Mammary epithelial cell (primary cell): ENCODE measurements at regions of chr2 and their contacts with region 1.

Region 1: GRCh38 chr2:240205348-240205747 is 64.9 kb upstream of the OTOS start:
- DNase-seq: peak; percentile 98
- H3K4me3 ChIP-seq: no peak overlapping the region
- H3K27ac ChIP-seq: no peak overlapping the region
- H3K4me1 ChIP-seq: peaks cover 10% of the 10 kb centered on the region
- H3K27me3 ChIP-seq: peaks cover 29% of the 10 kb centered on the region
- CTCF ChIP-seq: no peak

Region 2: DNA sequence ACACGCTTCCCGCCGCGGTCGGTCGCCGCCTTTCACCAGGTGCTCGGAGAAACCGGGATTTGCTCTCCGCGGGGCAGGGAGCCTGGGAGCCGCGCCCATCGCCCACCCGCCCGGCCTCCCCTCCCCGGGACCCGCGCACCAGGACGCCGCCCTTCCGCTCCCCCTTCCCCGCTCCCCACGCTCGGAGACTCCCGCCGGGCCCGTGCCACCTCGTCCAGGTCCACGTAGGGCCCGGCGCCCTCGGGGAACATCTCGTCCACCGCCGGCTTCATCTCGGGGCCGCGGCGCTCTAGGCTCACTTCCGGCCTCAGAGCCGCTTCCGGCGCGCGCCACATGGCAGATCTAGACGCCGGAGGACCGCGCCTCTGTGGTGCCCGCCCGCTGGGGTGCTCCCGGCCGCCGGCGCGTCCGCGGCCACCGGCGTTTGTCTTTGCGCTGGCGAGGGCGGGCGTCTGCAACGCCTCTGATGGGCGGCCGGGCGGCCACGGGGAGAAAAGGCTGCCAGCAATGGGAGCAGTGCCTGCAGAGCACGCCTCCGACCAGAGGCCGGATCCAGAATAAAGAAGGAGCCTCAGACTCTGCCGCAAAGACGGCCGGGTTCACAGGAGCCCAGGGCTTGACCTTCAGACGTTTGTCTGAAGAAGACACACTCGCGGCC is 69.2 kb before region 1 on chr2 and contains the start of gene COPS9:
- CTCF ChIA-PET with region 1: no interaction called
- dilution Hi-C with region 1: loop called (anchors 5 kb)
- in situ Hi-C with region 1: no loop called
- intact Hi-C with region 1: no loop called
- DNase-seq: peak; percentile 88
- H3K4me3 ChIP-seq: peak within 1 kb of the TSS; percentile 75 to 94 (median 87)
- H3K27ac ChIP-seq: peak within 1 kb of the TSS; percentile 63
- H3K4me1 ChIP-seq: peaks cover 9% of the 10 kb centered on the region
- H3K27me3 ChIP-seq: no peaks in the 10 kb centered on the region
- CTCF ChIP-seq: no peak
- total RNA-seq, gene COPS9: 40.2 to 142 TPM

Region 3: DNA sequence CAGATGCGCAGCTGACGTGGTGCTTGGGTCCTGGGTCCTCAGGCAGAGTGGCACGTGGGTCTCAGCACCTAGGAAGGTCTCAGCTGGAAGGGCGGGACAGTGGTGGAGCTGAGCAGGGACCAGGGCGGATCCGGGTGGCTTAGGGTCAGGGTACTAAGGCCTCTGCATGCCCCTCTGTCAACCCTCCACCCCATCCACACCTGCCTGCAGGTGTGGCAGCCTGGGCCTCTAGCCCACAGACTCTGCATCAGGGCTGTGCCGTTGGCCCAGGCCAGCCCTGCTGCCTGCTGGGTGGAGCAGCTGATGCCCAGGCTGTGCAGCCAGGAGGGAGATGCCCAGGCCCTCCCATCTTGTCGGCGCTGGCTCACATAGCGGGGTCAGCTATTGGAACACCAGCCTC is 40.3 kb before region 1 on chr2:
- CTCF ChIA-PET with region 1: no interaction called
- dilution Hi-C with region 1: no loop called
- in situ Hi-C with region 1: no loop called
- intact Hi-C with region 1: loop called (anchors 2 kb)
- DNase-seq: no peak
- H3K4me3 ChIP-seq: no peak overlapping the region
- H3K27ac ChIP-seq: no peak overlapping the region
- H3K4me1 ChIP-seq: no peaks in the 10 kb centered on the region
- H3K27me3 ChIP-seq: no peaks in the 10 kb centered on the region
- CTCF ChIP-seq: no peak

Region 4: DNA sequence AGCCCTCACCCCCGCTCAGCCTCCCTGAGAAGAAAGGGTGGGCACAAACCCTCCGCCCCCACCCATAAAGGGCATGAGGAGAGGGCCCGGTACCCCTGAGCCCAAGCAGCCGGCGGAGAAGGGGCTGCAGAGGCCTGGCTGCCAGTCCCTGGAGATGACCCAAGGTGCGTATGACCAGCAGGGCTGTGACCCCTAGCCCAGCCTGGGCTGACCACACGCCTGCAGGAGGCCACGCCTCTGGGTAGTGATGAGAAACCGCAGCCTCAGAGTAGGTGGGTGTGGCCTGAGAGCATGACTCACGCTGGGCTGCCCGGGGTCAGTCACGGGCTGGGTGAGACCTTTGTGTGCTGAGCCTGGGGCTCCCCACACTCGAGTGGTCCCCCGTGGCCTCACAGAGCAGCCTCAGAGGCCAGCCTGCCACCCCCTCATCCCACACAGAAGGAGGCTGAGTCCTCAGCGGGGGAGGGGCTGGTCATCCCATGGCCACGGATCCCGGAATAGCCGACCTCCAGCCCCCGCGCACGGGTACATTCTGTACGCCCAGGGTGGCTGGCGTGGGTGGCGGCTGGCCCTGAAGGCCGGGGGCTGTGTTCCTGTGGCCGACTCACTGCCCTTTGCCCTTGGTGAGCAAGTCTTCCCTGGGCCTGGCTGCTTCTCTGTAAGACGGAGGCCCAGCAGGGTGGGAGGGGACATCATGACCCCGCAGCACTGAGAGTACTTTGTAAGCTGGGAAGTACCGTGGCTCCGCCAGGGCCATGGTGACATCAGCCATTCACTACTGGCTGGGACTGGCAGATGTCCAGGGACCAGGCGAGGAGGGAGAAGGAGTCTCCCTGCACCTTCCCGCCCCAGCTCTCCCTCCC is 45.9 kb after region 1 on chr2:
- CTCF ChIA-PET with region 1: no interaction called
- dilution Hi-C with region 1: no loop called
- in situ Hi-C with region 1: no loop called
- intact Hi-C with region 1: no loop called
- DNase-seq: peak; percentile 83
- H3K4me3 ChIP-seq: peak overlapping the region in 2 of 3 experiments; percentile 21 to 33
- H3K27ac ChIP-seq: peak overlapping the region; percentile 30
- H3K4me1 ChIP-seq: peaks cover 35% of the 10 kb centered on the region
- H3K27me3 ChIP-seq: no peaks in the 10 kb centered on the region
- CTCF ChIP-seq: no peak

Region 5: DNA sequence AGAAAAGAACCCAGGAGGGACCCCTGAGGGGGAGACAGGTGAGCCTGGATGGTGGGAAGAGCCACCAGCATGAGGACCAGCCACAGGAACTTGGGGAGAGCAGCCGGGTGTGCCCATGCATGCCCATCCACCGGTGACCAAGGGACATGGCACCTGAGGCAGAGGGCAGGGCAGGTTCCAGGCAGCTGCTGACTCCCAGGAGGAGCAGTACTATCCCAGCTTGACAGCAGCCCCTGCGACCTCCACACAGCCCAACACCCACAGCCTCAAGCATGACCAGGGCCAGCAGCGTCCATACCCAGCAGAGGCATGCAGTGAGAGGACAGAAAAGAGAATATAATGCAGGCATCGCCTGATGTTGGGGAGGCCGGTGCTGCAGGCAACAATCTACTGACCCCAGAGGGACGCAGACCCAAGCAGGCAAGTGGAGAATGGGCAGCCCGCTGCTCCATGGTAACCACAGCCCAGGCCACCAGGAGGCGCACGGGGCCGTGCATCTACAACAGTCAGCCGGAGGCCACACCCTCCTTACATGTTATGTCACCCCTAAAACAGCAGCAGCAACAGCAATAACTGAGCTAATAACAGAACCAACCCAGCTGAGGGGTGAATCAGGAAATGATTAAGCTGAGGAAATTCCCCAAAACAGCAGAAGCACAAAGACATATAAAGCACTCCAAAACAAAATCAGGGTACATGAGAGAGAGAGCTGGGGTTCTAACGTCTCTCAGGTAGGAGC is 308.4 kb after region 1 on chr2:
- CTCF ChIA-PET with region 1: no interaction called
- dilution Hi-C with region 1: no loop called
- in situ Hi-C with region 1: no loop called
- intact Hi-C with region 1: no loop called
- DNase-seq: peak; percentile 80
- H3K4me3 ChIP-seq: no peak overlapping the region
- H3K27ac ChIP-seq: no peak overlapping the region
- H3K4me1 ChIP-seq: peaks cover 16% of the 10 kb centered on the region
- H3K27me3 ChIP-seq: no peaks in the 10 kb centered on the region
- CTCF ChIP-seq: peak; percentile 94 to 97